Psoas muscle (tissue), 8 donors: ENCODE measurements at regions of chr2 and their contacts with region 1.

Region 1: GRCh38 chr2:96265840-96266679 is at the starts of genes CIAO1 and TMEM127:
- DNase-seq: peak; percentile 98 to 99
- ATAC-seq: peak; percentile 94 to 97 (median 96)
- H3K4me3 ChIP-seq: peak within 1 kb of the TSS; percentile 88
- H3K27ac ChIP-seq: peak within 1 kb of the TSS; percentile 97
- H3K4me1 ChIP-seq: peaks cover 40% of the 10 kb centered on the region
- H3K27me3 ChIP-seq: no peaks in the 10 kb centered on the region
- CTCF ChIP-seq: peak; percentile 14
- total RNA-seq, gene CIAO1: 44.0 to 61.0 (median 56.5) TPM
- total RNA-seq, gene TMEM127: 23.1 to 33.0 (median 28.3) TPM

Region 2: DNA sequence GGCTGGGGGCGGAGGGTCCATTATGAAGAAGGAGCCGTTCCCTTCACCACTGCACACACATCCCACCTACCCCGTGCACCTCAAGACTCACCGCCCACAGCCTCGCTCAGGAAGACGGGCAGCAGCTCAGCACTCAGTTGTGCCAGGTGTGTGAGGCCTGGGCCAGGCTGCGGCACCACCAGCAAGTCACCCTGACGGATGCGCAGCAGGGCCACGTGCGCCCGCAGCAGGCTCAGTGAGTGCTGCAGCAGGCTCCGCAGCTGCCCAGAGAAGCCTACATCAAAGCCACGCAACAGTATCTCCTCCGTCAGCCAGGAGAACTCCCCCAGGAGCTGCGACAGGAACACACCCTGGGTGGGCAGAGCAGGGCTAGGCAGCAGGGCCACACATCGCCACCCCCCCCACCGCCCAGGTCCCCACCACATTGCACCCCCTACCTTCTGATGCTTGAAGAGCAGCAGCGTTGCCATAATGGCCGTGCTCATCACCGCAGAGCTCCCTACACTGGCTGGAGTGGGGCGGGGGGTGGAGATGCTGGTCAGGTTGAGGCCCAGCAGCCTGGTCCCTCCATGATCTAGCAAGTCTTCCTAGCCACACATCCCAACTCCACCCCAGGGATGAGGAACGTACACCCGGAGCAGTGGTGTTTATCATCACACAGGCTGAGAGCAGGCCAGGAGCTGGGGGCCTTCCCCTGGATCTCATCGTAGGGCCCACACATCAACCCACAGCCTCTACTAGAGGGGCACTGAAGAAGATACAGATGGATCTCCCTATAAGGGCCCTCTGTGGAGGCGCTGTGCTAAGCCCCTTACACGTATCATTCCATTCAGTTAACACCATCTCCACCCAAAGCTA is 241.5 kb before region 1 on chr2:
- intact Hi-C with region 1: loop called (anchors 10 kb)
- DNase-seq: no peak
- ATAC-seq: no peak
- H3K4me3 ChIP-seq: no peak overlapping the region
- H3K27ac ChIP-seq: no peak overlapping the region
- H3K4me1 ChIP-seq: no peaks in the 10 kb centered on the region
- H3K27me3 ChIP-seq: no peaks in the 10 kb centered on the region
- CTCF ChIP-seq: no peak

Region 3: GRCh38 chr2:96145036-96145847 is 120.8 kb before region 1 on chr2 and contains the start of gene DUSP2:
- intact Hi-C with region 1: loop called (anchors 5 to 10 kb)
- DNase-seq: peak; percentile 74 to 87
- ATAC-seq: peak; percentile 78 to 96 (median 89)
- H3K4me3 ChIP-seq: peak within 1 kb of the TSS; percentile 67
- H3K27ac ChIP-seq: peak within 1 kb of the TSS; percentile 70
- H3K4me1 ChIP-seq: peaks cover 11% of the 10 kb centered on the region
- H3K27me3 ChIP-seq: no peaks in the 10 kb centered on the region
- CTCF ChIP-seq: no peak
- total RNA-seq, gene DUSP2: 0.64 to 2.4 (median 1.8) TPM

Region 4: DNA sequence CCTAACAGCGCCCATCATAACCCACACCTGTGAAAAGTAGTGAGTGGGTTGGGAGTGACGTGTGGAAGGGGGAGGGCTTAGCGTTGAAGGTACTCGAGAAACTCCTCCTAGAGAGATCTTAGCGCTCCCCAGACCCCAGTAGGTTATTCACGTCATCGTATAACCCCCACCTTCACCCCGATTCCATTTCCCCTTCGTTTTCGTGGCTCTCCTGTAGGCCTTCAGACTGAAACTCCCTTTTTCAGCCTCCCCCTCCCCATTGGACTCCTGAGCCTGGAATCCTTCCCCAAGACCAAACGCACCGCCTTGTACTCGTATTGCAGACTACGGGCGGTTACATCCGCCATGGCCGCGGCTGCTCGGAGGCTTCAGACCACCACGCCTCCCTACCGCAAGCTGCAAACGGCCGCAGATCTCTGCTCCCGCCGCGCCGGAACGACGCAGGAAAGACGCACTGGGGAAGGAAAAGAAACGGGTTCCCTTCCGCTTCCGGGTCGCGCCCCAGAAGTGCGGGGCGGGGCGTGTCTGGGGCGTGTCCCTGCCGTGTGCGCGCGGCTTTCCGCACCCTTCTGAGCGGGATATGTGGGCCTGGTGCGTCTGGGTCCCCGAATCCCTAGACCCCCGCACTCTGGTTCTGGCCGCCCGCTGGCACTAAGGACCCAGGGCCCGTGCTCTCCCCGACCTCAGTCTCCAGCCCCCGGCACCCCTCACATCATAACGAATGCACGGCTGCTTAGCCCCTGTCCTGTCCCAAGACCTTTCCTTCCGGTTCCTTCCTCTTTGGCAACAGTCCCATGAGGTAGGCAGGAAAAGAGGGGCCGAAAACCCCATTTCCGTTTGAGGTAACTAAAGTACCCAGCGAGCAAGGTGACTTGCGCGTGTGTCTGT is 39.3 kb after region 1 on chr2 and contains the start of gene SNRNP200:
- intact Hi-C with region 1: loop called (anchors 2 to 5 kb)
- DNase-seq: peak; percentile 89 to 94
- ATAC-seq: peak; percentile 99 to 100 (median 100)
- H3K4me3 ChIP-seq: peak within 1 kb of the TSS; percentile 91
- H3K27ac ChIP-seq: peak within 1 kb of the TSS; percentile 88
- H3K4me1 ChIP-seq: peaks cover 22% of the 10 kb centered on the region
- H3K27me3 ChIP-seq: no peaks in the 10 kb centered on the region
- CTCF ChIP-seq: no peak
- total RNA-seq, gene SNRNP200: 61.1 to 83.1 (median 77.6) TPM